ENCODE measurements at regions of chr16 and their contacts with region 1.

Region 1: GRCh38 chr16:15811481-15812400 is 45.1 kb downstream of the MYH11 start:
- DNase-seq: peak; percentile 45
- ATAC-seq: peak; percentile 72
- H3K4me3 ChIP-seq: no peak overlapping the region
- H3K27ac ChIP-seq: no peak overlapping the region
- H3K4me1 ChIP-seq: peaks cover 6% of the 10 kb centered on the region; the same call in 1 of the 2 replicates
- H3K27me3 ChIP-seq: no peaks in the 10 kb centered on the region
- CTCF ChIP-seq: no peak

Region 2: GRCh38 chr16:15704545-15704987 is 107.2 kb before region 1 on chr16:
- CTCF ChIA-PET with region 1: no interaction called
- POLR2A ChIA-PET with region 1: no interaction called
- in situ Hi-C with region 1: no loop called
- intact Hi-C with region 1: no loop called
- DNase-seq: peak; percentile 58
- ATAC-seq: peak; percentile 90
- H3K4me3 ChIP-seq: no peak overlapping the region
- H3K27ac ChIP-seq: no peak overlapping the region
- H3K4me1 ChIP-seq: no peaks in the 10 kb centered on the region
- H3K27me3 ChIP-seq: no peaks in the 10 kb centered on the region
- CTCF ChIP-seq: peak; percentile 94

Region 3: GRCh38 chr16:15822957-15823356 is 11.2 kb after region 1 on chr16:
- CTCF ChIA-PET with region 1: interaction called, 10 read pairs
- POLR2A ChIA-PET with region 1: no interaction called
- in situ Hi-C with region 1: no loop called
- intact Hi-C with region 1: no loop called
- DNase-seq: no peak
- ATAC-seq: peak; percentile 39; the same call in 1 of the 2 replicates
- H3K4me3 ChIP-seq: no peak overlapping the region
- H3K27ac ChIP-seq: no peak overlapping the region
- H3K4me1 ChIP-seq: no peaks in the 10 kb centered on the region
- H3K27me3 ChIP-seq: no peaks in the 10 kb centered on the region
- CTCF ChIP-seq: no peak

Measured in Panc1 (cell line).